ENCODE measurements at regions of chr12 and their contacts with region 1.

Region 1: GRCh38 chr12:3326156-3326849 is 164.7 kb upstream of the PRMT8 start:
- DNase-seq: no peak
- CTCF ChIP-seq: no peak

Region 2: DNA sequence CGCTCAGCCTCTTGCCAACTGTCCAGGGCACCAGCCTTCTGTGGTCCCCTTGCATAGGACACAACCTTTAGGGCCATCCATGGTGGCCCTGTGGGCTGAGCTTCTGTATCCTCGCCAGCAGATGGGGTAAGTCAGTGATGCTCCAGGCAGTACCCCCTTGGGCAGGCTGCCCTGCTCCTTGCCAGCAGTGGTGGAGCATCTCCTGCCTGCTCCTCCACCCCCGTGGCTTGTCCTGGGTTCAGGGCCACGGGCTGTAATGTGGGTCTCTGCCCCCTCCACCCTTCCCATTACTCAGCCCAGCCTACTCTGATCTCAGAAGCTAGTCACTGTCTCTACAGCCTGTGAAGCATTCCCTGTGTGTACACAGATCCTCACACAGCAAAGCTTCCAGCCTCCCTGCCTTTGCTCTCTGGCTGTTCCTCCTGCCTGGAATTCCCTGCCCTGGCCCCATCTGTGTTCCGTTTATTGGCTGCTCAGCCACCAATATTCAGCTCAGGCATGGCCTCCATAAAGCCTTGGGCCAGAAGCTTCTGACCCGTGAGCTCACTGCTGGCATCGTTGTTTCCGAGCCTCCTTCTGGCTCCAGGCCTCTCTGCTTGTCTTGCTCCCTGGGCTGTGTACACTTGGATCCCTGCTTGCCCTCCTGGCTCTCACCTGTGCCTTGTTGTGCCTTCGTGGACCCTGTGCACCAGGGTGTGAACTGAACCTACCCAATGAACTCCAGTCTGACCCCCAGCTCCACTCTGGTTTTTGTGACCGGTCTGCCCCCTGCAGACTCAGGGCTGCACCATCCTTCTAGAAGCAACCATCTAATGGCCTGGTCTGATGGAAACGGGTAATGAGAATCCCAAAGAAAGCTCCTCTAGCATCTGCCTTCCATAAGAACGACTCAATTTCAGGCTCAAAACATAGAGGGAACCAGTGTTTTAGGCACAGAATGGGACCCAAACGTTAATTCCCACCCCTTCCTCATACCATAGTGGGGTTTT is 12.3 kb before region 1 on chr12:
- CTCF ChIA-PET with region 1: interaction called, 15 read pairs
- POLR2A ChIA-PET with region 1: no interaction called
- DNase-seq: peak; percentile 57
- CTCF ChIP-seq: peak; percentile 32

Measured in GM10248 (cell line).